Activated T-helper 1 cell treated with anti-CD3 and anti-CD28 coated beads, Interleukin-12 subunit alpha, Interleukin-12 subunit beta, Interleukin-2, Interleukin-4 antibody, amounts not matched to agents 30 ng/mL and 10 ng/mL and 1 ng/mL, durations not matched to agents 14 hours and 24 hours and 36 hours (primary cell): ENCODE measurements at regions of chr16 and their contacts with region 1.

Region 1: GRCh38 chr16:79798416-79799053 is 198.0 kb upstream of the MAF start:
- DNase-seq: no peak
- H3K4me3 Mint-ChIP-seq: no peak overlapping the region
- H3K27ac Mint-ChIP-seq: no peak overlapping the region
- H3K4me1 Mint-ChIP-seq: no peaks in the 10 kb centered on the region
- H3K27me3 Mint-ChIP-seq: peaks cover 3% of the 10 kb centered on the region

Region 2: DNA sequence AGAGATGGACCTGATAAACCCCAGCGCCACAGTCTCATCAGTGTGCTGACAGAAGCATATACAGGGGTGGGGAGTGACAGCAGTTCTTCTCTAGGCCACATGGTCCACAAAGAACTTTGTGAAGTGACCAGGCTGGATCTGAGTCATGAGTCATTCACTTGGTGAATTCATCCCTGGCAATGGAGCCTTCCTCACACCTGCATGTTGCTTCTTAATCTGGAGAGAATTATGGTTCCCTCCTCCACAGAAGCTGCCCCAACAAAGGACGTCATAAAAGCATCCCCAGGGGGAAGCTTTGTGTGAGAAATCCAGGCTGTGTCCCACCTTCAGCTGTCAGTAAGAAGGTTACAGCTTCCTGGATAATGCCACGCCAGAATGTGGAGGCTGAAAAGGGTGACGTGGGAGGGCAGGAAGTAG is 17.6 kb after region 1 on chr16:
- intact Hi-C with region 1: loop called (anchors 2 kb)
- DNase-seq: no peak
- H3K4me3 Mint-ChIP-seq: no peak overlapping the region
- H3K27ac Mint-ChIP-seq: no peak overlapping the region
- H3K4me1 Mint-ChIP-seq: no peaks in the 10 kb centered on the region
- H3K27me3 Mint-ChIP-seq: peaks cover 9% of the 10 kb centered on the region